ENCODE measurements at regions of chr6 and their contacts with region 1.

Region 1: DNA sequence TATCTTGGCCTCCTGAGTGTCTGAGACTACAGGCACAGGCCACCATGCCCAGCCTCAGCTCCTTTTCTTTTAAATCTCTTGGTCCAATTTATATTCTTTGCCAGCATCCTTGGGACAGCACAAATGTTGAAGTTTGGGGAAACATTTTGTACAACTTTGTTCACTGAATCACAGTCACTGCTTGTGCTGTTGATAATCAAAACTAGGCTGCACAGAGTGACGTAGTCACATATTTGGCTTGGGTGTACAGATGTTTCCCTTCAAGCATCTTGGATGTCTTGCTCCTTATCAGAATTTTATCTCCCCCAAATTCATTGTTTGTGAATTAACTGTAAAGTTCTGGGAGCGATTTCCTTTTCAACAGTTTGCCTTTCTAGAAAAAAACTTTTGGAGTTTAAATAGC is 17.9 kb downstream of the CARMIL1 start:
- DNase-seq: no peak
- H3K4me3 ChIP-seq: no peak overlapping the region
- H3K27ac ChIP-seq: peak overlapping the region in 1 of 3 donors; percentile 53
- H3K4me1 ChIP-seq: peaks cover 0 to 48% of the 10 kb centered on the region in 2 donors
- H3K27me3 ChIP-seq: no peaks in the 10 kb centered on the region
- CTCF ChIP-seq: no peak
- POLR2A ChIP-seq: no peak

Region 2: DNA sequence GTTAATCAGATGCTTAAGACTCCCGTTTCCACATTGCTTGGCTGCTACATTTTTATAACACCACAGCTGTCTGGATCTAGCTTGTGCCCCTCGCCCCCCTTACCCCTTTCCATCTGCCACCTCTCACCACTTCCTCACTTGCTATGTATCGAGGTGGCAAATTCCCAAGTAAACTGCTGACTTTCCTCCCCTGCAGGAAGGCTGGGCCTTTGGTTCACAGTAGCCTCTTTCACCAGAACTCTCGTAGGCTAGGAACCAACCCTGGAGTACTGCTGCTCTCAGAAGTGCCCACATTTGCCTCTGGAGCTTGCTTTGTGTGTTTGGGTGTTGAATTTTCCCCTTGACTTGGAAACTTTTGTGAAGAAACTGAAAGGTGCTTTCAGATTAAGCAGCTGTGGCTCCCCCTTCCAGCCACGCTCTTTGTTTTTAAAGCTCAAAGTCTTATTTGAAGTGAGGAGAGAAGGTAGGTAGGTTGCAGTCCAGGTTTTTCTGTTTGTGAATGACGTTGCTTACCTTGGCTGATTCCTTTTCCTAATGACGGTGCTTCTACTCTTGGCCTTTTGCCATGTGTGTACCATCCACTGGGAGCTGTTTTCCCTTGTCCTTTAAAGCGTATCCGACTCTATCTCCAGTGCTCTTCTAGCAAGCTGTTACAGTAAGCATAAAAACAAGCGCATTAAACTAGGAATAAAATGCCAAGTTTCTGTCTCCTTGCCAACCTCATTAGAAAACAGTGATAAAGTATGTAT is 72.6 kb after region 1 on chr6:
- intact Hi-C with region 1: loop called (anchors 10 kb)
- DNase-seq: peak; percentile 45 to 57
- H3K4me3 ChIP-seq: no peak overlapping the region
- H3K27ac ChIP-seq: peak overlapping the region; percentile 70 to 85 (median 85)
- H3K4me1 ChIP-seq: peaks cover 20 to 43% of the 10 kb centered on the region in 2 donors
- H3K27me3 ChIP-seq: no peaks in the 10 kb centered on the region
- CTCF ChIP-seq: peak in 1 of 6 experiments; percentile 7
- POLR2A ChIP-seq: peak in 1 of 2 donors; percentile 42

Region 3: DNA sequence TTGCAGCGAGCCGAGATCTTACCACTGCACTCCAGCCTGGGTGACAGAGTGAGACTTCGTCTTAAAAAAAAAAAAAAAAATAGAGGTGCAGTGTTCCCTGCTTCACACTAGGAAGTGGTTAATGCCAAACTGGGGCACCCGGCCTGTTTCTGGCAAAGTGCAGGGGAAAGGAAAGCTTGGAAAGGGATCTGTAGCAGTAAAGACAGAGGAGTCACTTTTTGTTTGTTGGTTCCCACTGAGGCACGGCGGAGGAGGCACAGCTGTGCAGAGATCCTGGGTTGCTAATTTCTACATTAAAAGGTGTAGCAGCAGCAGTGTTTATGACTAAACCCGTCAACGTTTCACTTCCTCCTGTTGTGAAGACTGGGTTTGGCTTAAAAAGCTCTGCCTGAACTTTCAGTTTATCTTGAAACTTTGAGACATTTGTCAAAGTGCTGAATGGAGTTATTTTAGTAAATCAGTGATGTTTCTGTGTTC is 107.7 kb after region 1 on chr6:
- intact Hi-C with region 1: no loop called
- DNase-seq: no peak
- H3K4me3 ChIP-seq: no peak overlapping the region
- H3K27ac ChIP-seq: no peak overlapping the region
- H3K4me1 ChIP-seq: peaks cover 0 to 5% of the 10 kb centered on the region in 2 donors
- H3K27me3 ChIP-seq: no peaks in the 10 kb centered on the region
- CTCF ChIP-seq: no peak
- POLR2A ChIP-seq: no peak

Region 4: GRCh38 chr6:25756382-25757363 is 459.6 kb after region 1 on chr6:
- intact Hi-C with region 1: no loop called
- DNase-seq: no peak
- H3K4me3 ChIP-seq: no peak overlapping the region
- H3K27ac ChIP-seq: no peak overlapping the region
- H3K4me1 ChIP-seq: no peaks in the 10 kb centered on the region
- H3K27me3 ChIP-seq: no peaks in the 10 kb centered on the region
- CTCF ChIP-seq: no peak
- POLR2A ChIP-seq: no peak